ENCODE measurements at regions of chr5 and their contacts with region 1.

Region 1: DNA sequence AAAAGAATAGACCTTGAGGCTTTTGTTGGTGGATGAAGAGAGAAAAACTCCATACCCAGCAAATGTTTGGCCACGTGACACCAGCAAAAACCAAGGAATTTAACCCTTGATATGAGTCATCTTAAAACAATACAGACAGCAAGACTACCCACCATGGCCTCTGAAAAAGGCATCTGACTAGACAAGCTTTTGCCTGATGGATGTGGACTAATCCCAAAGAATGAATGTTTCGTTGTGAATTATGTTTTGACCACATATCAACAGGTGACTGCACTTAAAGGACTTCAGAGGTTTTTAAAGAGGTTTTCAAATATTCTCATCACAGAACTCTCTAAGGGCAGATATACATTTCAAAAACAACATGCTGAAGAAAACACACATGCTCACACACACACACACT is 33.0 kb upstream of the SLC1A3 start:
- DNase-seq: peak; percentile 51
- H3K4me3 ChIP-seq: no peak overlapping the region
- H3K27ac ChIP-seq: peak overlapping the region; percentile 24
- H3K4me1 ChIP-seq: peaks cover 29% of the 10 kb centered on the region
- H3K27me3 ChIP-seq: no peaks in the 10 kb centered on the region
- CTCF ChIP-seq: no peak
- POLR2A ChIP-seq: no peak

Region 2: GRCh38 chr5:35926389-35927051 is 646.9 kb before region 1 on chr5:
- CTCF ChIA-PET with region 1: no interaction called
- POLR2A ChIA-PET with region 1: no interaction called
- dilution Hi-C with region 1: no loop called
- intact Hi-C with region 1: no loop called
- DNase-seq: peak; percentile 54
- H3K4me3 ChIP-seq: no peak overlapping the region
- H3K27ac ChIP-seq: no peak overlapping the region
- H3K4me1 ChIP-seq: no peaks in the 10 kb centered on the region
- H3K27me3 ChIP-seq: peaks cover 2 to 3% of the 10 kb centered on the region in 2 experiments
- CTCF ChIP-seq: peak; percentile 69 to 70
- POLR2A ChIP-seq: no peak

Region 3: GRCh38 chr5:36606428-36607113 is 33.1 kb after region 1 on chr5 and contains the start of gene SLC1A3:
- CTCF ChIA-PET with region 1: interaction called, 3 read pairs
- POLR2A ChIA-PET with region 1: interaction called, 3 read pairs
- dilution Hi-C with region 1: no loop called
- intact Hi-C with region 1: loop called (anchors 1 kb)
- DNase-seq: peak; percentile 75
- H3K4me3 ChIP-seq: peak within 1 kb of the TSS; percentile 26 to 64 (median 37)
- H3K27ac ChIP-seq: no peak within 1 kb of the TSS
- H3K4me1 ChIP-seq: peaks cover 6% of the 10 kb centered on the region
- H3K27me3 ChIP-seq: peaks cover 17 to 36% of the 10 kb centered on the region in 2 experiments
- CTCF ChIP-seq: no peak
- POLR2A ChIP-seq: no peak
- total RNA-seq, gene SLC1A3: 0.44 TPM in 1 of 2 replicates, not detected in the other

Region 4: DNA sequence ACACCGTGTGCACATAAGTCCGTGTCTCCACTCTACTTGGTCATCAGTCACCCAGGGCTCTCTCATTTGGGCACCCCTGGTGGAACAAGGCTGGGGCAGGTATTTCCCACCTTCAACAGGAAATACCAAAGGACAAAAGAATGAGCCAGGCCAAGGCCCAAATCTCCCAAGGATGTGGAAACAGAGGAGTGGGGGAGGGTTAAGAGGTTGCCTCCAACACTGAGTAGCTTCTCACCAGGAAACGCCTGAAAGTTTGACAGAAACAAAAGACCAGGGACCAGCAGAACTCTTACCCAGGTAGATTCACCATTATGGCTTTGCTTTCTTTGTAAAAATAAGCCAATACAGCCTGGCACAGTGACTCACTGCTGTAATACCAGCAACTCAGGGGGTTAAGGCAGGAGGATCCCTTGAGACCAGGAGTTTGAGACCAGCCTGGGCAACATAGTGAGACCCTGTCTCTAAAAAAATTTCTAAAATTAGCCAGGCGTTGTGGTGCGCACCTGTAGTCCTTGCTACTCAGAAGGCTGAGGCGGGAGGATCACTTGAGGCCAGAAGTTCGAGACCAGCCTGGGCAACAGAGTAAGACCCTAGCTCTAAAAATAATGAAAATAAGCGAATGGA is 45.7 kb after region 1 on chr5:
- CTCF ChIA-PET with region 1: no interaction called
- POLR2A ChIA-PET with region 1: no interaction called
- dilution Hi-C with region 1: no loop called
- intact Hi-C with region 1: no loop called
- DNase-seq: no peak
- H3K4me3 ChIP-seq: no peak overlapping the region
- H3K27ac ChIP-seq: no peak overlapping the region
- H3K4me1 ChIP-seq: no peaks in the 10 kb centered on the region
- H3K27me3 ChIP-seq: peaks cover 0 to 3% of the 10 kb centered on the region in 2 experiments
- CTCF ChIP-seq: no peak
- POLR2A ChIP-seq: no peak